Natural killer cell (primary cell): ENCODE measurements at regions of chr11 and their contacts with region 1.

Region 1: GRCh38 chr11:66638177-66639065 is at the start of gene RBM4:
- DNase-seq: peak; percentile 91 to 100
- ATAC-seq: peak; percentile 89 to 98 (median 91)
- H3K4me3 ChIP-seq: peak within 1 kb of the TSS; percentile 73
- H3K4me3 Mint-ChIP-seq: peak within 1 kb of the TSS; percentile 92
- H3K27ac ChIP-seq: peak within 1 kb of the TSS; percentile 81
- H3K27ac Mint-ChIP-seq: peak within 1 kb of the TSS; percentile 88 to 96
- H3K4me1 ChIP-seq: peaks cover 35% of the 10 kb centered on the region
- H3K4me1 Mint-ChIP-seq: peaks cover 57 to 66% of the 10 kb centered on the region in 2 donors
- H3K27me3 ChIP-seq: no peaks in the 10 kb centered on the region
- H3K27me3 Mint-ChIP-seq: no peaks in the 10 kb centered on the region
- CTCF ChIP-seq: no peak
- total RNA-seq, gene RBM4: 219 to 241 (median 224) TPM

Region 2: GRCh38 chr11:66592457-66593302 is 45.7 kb before region 1 on chr11 and contains the starts of genes CCDC87 and CCS:
- intact Hi-C with region 1: loop called (anchors 1 kb)
- DNase-seq: peak; percentile 98 to 99
- ATAC-seq: peak; percentile 96 to 97 (median 96)
- H3K4me3 ChIP-seq: peak within 1 kb of the TSS; percentile 52
- H3K4me3 Mint-ChIP-seq: peak within 1 kb of the TSS; percentile 100
- H3K27ac ChIP-seq: peak within 1 kb of the TSS; percentile 63
- H3K27ac Mint-ChIP-seq: peak within 1 kb of the TSS; percentile 98 to 100
- H3K4me1 ChIP-seq: peaks cover 20% of the 10 kb centered on the region
- H3K4me1 Mint-ChIP-seq: peaks cover 31 to 33% of the 10 kb centered on the region in 2 donors
- H3K27me3 ChIP-seq: no peaks in the 10 kb centered on the region
- H3K27me3 Mint-ChIP-seq: no peaks in the 10 kb centered on the region
- CTCF ChIP-seq: peak; percentile 72
- total RNA-seq, gene CCDC87: 0.40 to 0.68 (median 0.49) TPM
- total RNA-seq, gene CCS: 27.1 to 35.6 (median 32.4) TPM

Region 3: DNA sequence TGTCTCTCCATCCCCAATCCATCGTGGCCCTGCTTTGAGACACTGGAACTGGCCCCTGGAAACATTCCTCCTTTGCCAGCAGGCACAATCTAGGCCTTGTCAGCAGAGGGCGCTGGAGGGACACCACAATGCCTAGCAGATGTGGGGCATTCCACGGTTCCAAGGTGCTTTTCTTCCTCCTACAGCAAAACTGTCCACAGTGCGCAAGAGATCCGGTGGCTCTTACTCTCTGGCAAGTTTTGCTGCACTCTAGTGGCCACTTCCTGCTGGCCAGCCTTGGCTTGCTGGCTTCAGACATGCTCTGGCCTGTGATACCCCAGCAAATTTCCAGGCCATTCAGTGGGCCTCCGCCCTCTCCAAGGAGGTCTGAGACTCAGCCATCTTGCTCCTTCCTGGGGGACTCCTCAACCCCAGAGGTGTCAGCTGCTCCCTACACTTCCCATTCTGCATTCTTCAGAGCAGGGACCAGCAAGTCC is 56.3 kb after region 1 on chr11:
- intact Hi-C with region 1: no loop called
- DNase-seq: peak; percentile 74 to 92
- ATAC-seq: peak; percentile 82 to 98 (median 96)
- H3K4me3 ChIP-seq: no peak overlapping the region
- H3K4me3 Mint-ChIP-seq: no peak overlapping the region
- H3K27ac ChIP-seq: no peak overlapping the region
- H3K27ac Mint-ChIP-seq: peak overlapping the region in 1 of 2 donors; percentile 44
- H3K4me1 ChIP-seq: peaks cover 5% of the 10 kb centered on the region
- H3K4me1 Mint-ChIP-seq: peaks cover 0 to 11% of the 10 kb centered on the region in 2 donors
- H3K27me3 ChIP-seq: no peaks in the 10 kb centered on the region
- H3K27me3 Mint-ChIP-seq: no peaks in the 10 kb centered on the region
- CTCF ChIP-seq: peak; percentile 74